MCF 10A (cell line): ENCODE measurements at regions of chr17 and their contacts with region 1.

Region 1: DNA sequence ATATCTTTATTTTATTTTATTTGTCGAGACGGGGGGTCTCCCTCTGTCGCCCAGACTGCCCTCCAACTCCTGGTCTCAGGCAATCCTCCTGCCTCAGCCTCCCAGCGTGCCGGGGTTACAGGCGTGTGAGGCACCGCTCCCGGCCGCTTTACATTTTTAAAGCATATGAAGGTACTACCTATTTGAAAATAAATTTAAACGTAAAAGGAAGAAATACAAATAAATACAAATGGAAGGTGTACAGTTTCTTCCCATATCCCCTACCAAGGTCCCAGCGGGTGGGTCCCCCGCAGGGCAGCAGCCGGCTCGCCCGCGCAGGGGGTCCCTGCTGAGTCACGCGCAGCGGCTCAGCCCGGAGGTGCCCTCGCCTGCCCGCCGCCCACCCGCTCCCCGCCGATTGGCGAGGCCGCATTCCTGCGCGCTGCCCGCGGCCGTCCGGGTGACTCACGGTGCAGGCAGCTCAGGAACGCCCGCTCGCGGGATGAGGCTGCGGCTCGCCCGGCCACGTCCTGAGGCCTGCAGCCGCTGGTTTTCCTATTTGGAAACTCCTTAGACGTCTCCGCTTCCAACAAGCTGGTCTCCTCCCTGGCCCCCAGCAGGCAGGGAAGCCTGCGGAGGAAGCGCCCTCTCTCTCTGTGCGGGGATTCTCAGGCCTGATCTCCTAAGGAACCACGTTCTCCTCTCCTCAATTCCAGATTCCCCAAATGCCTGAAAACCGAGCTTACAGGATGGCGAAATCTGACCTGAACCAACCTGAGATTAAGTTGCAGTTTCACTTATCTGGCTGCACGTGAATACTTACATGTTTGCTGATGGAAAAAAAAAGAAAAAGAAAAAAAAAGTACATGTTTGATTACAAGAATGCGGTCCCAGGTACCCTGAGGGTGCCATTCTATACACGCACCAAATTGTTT is 54.9 kb upstream of the MAP3K14 start:
- DNase-seq: peak; percentile 95
- H3K4me3 Mint-ChIP-seq: peak overlapping the region; percentile 83
- H3K27ac Mint-ChIP-seq: peak overlapping the region; percentile 95
- H3K4me1 Mint-ChIP-seq: peaks cover 35% of the 10 kb centered on the region
- H3K27me3 Mint-ChIP-seq: no peaks in the 10 kb centered on the region
- CTCF ChIP-seq: no peak

Region 2: DNA sequence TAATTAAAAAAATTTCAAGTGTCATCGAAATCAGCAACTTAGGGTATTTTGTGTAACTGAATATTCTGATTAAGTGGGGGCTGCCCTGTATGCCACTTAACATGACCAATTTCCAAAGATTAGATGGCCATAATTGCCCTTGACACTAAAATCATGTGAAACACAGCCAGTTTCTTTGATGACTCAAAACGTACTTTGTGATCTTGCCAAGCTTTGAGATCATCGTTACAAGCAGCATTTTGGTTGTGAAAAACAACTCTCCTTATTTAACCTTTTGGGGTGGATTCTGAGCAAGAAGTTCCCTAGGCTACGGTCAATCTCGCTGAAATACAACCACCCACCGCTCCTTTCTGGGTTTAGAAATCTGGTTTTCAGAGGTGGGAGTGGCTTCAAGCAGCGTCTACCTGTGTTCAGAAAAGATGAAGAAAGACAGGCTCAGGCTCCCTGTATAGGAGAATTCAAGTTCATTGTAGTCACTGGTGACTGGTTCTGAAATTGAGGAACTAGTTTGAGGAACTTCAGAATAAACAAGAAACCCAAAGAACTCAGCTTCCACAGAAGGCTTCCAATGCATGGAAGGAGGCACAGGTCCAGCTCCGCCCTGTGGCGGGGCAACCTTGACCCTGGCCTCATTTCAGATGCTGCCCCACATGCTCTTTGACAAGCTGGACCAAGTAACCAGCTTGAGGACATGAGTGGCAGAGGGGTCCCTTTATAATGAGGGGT is 64.2 kb before region 1 on chr17:
- CTCF ChIA-PET with region 1: interaction called, 9 read pairs
- POLR2A ChIA-PET with region 1: interaction called, 404 read pairs
- intact Hi-C with region 1: no loop called
- DNase-seq: peak; percentile 88
- H3K4me3 Mint-ChIP-seq: peak overlapping the region; percentile 32
- H3K27ac Mint-ChIP-seq: peak overlapping the region; percentile 90
- H3K4me1 Mint-ChIP-seq: peaks cover 21% of the 10 kb centered on the region
- H3K27me3 Mint-ChIP-seq: no peaks in the 10 kb centered on the region
- CTCF ChIP-seq: no peak